CD8-positive, alpha-beta T cell (primary cell): ENCODE measurements at regions of chr12 and their contacts with region 1.

Region 1: DNA sequence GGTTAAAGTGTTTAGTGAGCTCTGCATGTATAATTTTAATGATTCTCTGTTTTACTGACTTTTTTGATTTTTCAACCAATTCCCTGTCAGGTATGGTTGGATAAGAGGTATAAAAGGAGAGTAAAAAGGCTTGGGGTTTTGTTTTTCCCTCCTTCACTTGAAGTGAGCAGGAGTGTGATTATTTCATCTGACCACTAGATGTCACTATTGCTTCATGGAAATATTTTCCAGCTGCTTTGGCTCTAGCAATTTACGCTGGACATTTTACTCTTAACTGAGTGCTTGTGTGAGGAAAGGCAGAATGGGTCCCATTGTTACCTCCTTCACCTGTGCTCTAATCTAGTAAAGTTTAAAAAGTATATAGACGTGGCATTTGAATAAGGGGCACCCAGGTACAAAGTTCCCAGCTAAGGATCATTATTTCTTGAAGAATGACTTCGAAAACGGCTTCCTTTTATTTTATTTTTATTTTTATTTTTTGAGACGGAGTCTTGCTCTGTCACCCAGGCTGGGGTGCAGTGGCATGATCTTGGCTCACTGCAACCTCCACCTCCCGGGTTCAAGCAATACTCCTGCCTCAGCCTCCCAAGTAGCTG is 66.5 kb downstream of the TBC1D30 start:
- DNase-seq: peak in 2 of 9 experiments; percentile 60 to 69
- ATAC-seq: peak; percentile 48
- H3K4me3 ChIP-seq: no peak overlapping the region
- H3K4me3 Mint-ChIP-seq: no peak overlapping the region
- H3K27ac ChIP-seq: no peak overlapping the region
- H3K27ac Mint-ChIP-seq: no peak overlapping the region
- H3K4me1 ChIP-seq: no peaks in the 10 kb centered on the region
- H3K4me1 Mint-ChIP-seq: no peaks in the 10 kb centered on the region
- H3K27me3 ChIP-seq: no peaks in the 10 kb centered on the region
- H3K27me3 Mint-ChIP-seq: peaks cover 27% of the 10 kb centered on the region
- CTCF ChIP-seq: peak; percentile 90

Region 2: GRCh38 chr12:64716371-64716770 is 174.6 kb before region 1 on chr12:
- CTCF ChIA-PET with region 1: no interaction called
- POLR2A ChIA-PET with region 1: no interaction called
- intact Hi-C with region 1: no loop called
- DNase-seq: peak in 2 of 9 experiments; percentile 29 to 58
- ATAC-seq: no peak
- H3K4me3 ChIP-seq: no peak overlapping the region
- H3K4me3 Mint-ChIP-seq: no peak overlapping the region
- H3K27ac ChIP-seq: peak overlapping the region in 1 of 2 experiments; percentile 53
- H3K27ac Mint-ChIP-seq: peak overlapping the region; percentile 20
- H3K4me1 ChIP-seq: peaks cover 10% of the 10 kb centered on the region
- H3K4me1 Mint-ChIP-seq: peaks cover 31% of the 10 kb centered on the region
- H3K27me3 ChIP-seq: no peaks in the 10 kb centered on the region
- H3K27me3 Mint-ChIP-seq: no peaks in the 10 kb centered on the region
- CTCF ChIP-seq: no peak

Region 3: GRCh38 chr12:65121049-65121955 is 230.3 kb after region 1 on chr12 and contains the start of gene WIF1:
- CTCF ChIA-PET with region 1: no interaction called
- POLR2A ChIA-PET with region 1: no interaction called
- intact Hi-C with region 1: loop called (anchors 5 kb)
- DNase-seq: peak in 3 of 9 experiments; percentile 12 to 33 (median 26)
- ATAC-seq: peak; percentile 62
- H3K4me3 ChIP-seq: peak within 1 kb of the TSS; percentile 9 to 49
- H3K4me3 Mint-ChIP-seq: peak within 1 kb of the TSS; percentile 51
- H3K27ac ChIP-seq: no peak within 1 kb of the TSS
- H3K27ac Mint-ChIP-seq: no peak within 1 kb of the TSS
- H3K4me1 ChIP-seq: peaks cover 6% of the 10 kb centered on the region
- H3K4me1 Mint-ChIP-seq: peaks cover 11% of the 10 kb centered on the region
- H3K27me3 ChIP-seq: peaks cover 15 to 21% of the 10 kb centered on the region in 2 experiments
- H3K27me3 Mint-ChIP-seq: peaks cover 50% of the 10 kb centered on the region
- CTCF ChIP-seq: peak; percentile 27
- total RNA-seq, gene WIF1: not detected

Region 4: GRCh38 chr12:65986047-65986446 is 1095.1 kb after region 1 on chr12:
- CTCF ChIA-PET with region 1: interaction called, 9 read pairs
- POLR2A ChIA-PET with region 1: no interaction called
- intact Hi-C with region 1: loop called in 1 of 2 experiments (anchors 1 kb)
- DNase-seq: no peak
- ATAC-seq: no peak
- H3K4me3 ChIP-seq: no peak overlapping the region
- H3K4me3 Mint-ChIP-seq: no peak overlapping the region
- H3K27ac ChIP-seq: no peak overlapping the region
- H3K27ac Mint-ChIP-seq: no peak overlapping the region
- H3K4me1 ChIP-seq: no peaks in the 10 kb centered on the region
- H3K4me1 Mint-ChIP-seq: no peaks in the 10 kb centered on the region
- H3K27me3 ChIP-seq: peaks cover 0 to 2% of the 10 kb centered on the region in 2 experiments
- H3K27me3 Mint-ChIP-seq: peaks cover 2% of the 10 kb centered on the region
- CTCF ChIP-seq: no peak

Region 5: GRCh38 chr12:66107451-66107915 is 1216.5 kb after region 1 on chr12:
- CTCF ChIA-PET with region 1: interaction called, 33 read pairs
- POLR2A ChIA-PET with region 1: no interaction called
- intact Hi-C with region 1: loop called in 1 of 2 experiments (anchors 1 kb)
- DNase-seq: peak in 8 of 9 experiments; percentile 3 to 81 (median 38)
- ATAC-seq: peak; percentile 81
- H3K4me3 ChIP-seq: no peak overlapping the region
- H3K4me3 Mint-ChIP-seq: no peak overlapping the region
- H3K27ac ChIP-seq: no peak overlapping the region
- H3K27ac Mint-ChIP-seq: no peak overlapping the region
- H3K4me1 ChIP-seq: no peaks in the 10 kb centered on the region
- H3K4me1 Mint-ChIP-seq: peaks cover 3% of the 10 kb centered on the region
- H3K27me3 ChIP-seq: no peaks in the 10 kb centered on the region
- H3K27me3 Mint-ChIP-seq: peaks cover 6% of the 10 kb centered on the region
- CTCF ChIP-seq: peak; percentile 74